Dendritic cell treated with granulocyte-macrophage colony-stimulating factor and Interleukin-4, amounts not matched to agents 40 ng/mL and 50 ng/mL, for 4 days (primary cell): ENCODE measurements at regions of chr4 and their contacts with region 1.

Region 1: GRCh38 chr4:19224820-19225219 is 1026.9 kb upstream of the SLIT2 start:
- H3K4me3 Mint-ChIP-seq: no peak overlapping the region
- H3K27ac Mint-ChIP-seq: no peak overlapping the region
- H3K4me1 Mint-ChIP-seq: no peaks in the 10 kb centered on the region
- H3K27me3 Mint-ChIP-seq: no peaks in the 10 kb centered on the region

Region 2: DNA sequence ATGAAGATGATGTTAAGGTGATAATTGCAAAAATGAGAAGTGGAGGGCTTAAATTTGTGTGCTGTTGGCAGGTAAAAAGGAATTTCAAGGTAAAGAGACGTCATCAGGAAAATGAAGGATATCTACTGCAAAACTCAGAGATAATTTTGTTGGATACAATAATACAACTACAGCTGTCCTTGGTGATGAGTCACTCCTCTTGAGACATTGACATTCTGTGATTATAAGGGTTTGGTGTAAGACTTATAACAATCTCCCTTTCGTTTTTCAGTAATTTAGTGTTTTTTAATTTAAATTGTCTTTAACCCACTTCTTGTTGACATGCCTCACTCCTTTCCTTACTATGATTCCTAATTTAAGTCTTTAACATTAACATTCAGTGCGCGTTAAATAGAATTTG is 47.2 kb before region 1 on chr4:
- intact Hi-C with region 1: no loop called
- H3K4me3 Mint-ChIP-seq: no peak overlapping the region
- H3K27ac Mint-ChIP-seq: no peak overlapping the region
- H3K4me1 Mint-ChIP-seq: no peaks in the 10 kb centered on the region
- H3K27me3 Mint-ChIP-seq: no peaks in the 10 kb centered on the region

Region 3: DNA sequence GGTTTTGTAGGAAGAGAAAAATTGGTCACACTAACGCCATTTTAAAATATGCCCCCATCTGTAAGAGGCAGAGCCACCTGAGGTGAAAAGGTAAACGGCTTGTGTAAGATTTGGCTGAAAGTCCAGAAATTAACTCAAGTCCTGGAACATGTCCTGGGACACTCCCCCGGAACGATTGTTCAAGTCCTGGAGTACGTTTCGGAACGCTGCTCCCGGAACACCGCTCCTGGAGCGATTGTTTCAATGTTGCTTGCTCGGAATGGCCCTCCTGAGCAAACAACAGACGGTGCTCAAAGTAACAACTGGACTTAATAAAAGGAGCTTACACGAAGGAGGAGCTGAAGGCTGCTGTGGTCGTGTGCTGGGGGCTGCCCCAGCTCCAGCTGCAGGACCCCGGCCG is 230.4 kb after region 1 on chr4:
- intact Hi-C with region 1: no loop called
- H3K4me3 Mint-ChIP-seq: no peak overlapping the region
- H3K27ac Mint-ChIP-seq: no peak overlapping the region
- H3K4me1 Mint-ChIP-seq: no peaks in the 10 kb centered on the region
- H3K27me3 Mint-ChIP-seq: no peaks in the 10 kb centered on the region

Region 4: DNA sequence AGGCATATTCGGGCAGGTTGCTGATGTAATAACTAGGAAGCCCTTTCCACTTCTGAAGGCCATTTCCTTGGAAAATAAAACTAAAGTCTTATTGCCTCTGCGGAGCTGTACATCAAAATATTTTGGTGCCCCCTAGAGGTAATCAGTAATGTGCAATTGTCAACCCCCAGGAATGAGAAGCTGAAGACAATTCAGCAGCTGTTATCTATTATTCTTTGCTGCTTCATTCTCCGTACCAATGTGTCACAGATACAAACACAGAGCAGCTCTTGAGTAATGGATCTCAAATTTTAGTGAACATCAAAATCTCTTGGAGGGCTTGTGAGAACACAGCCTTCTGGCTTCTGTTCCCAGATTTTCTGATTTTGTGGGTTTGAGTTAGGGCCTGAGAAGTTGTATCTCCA is 1023.3 kb after region 1 on chr4:
- intact Hi-C with region 1: loop called (anchors 5 kb)
- H3K4me3 Mint-ChIP-seq: no peak overlapping the region
- H3K27ac Mint-ChIP-seq: no peak overlapping the region
- H3K4me1 Mint-ChIP-seq: no peaks in the 10 kb centered on the region
- H3K27me3 Mint-ChIP-seq: peaks cover 36% of the 10 kb centered on the region

Region 5: DNA sequence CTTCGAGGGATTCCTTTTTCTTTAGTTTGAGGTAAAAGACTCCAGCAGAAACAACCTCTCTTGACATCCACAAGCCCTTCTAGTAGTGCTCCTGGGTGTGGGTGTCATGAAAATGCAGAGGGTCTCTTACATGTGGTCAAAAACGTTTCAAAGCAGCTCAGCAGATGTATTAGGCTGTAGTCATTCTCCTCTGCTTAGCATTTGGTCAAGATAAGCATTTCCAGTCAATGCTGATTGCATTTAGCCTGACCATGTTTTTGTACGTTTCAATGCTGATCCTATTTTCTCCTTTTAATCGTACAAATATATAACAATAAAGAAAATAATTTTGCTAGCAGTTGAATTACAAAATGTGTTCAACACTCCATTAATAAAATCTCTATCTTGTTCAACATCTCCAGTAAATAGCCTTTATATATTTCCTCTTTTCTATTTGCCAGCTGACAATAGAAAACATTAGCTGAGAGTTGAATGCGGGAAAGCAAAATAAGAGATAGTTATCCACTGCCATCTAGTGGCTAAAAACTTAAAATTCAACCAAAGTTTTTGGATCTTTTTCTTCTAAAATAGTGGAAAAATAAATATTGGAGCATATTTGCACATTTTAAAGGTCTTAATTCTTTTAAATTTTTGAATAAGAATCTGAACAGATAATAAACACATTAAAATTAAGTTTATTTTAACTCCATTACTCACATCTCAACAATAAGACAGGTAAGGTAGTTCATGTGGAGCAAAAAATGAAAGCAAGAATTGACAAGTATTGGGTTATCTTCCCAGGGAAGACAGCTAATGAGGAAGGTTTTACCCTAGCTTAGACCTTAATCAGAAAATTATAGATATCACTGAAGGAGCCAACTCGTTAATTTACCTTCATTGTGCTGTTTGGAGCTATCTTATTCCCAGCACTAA is 1460.3 kb after region 1 on chr4:
- intact Hi-C with region 1: loop called (anchors 5 kb)
- H3K4me3 Mint-ChIP-seq: no peak overlapping the region
- H3K27ac Mint-ChIP-seq: no peak overlapping the region
- H3K4me1 Mint-ChIP-seq: no peaks in the 10 kb centered on the region
- H3K27me3 Mint-ChIP-seq: peaks cover 9% of the 10 kb centered on the region